WTC11 (cell line): ENCODE measurements at regions of chr1 and their contacts with region 1.

Region 1: GRCh38 chr1:22234476-22235030 is 91.7 kb upstream of the WNT4 start:
- DNase-seq: no peak
- ATAC-seq: no peak
- H3K4me3 Mint-ChIP-seq: no peak overlapping the region
- H3K27ac Mint-ChIP-seq: no peak overlapping the region
- H3K4me1 Mint-ChIP-seq: peaks cover 11% of the 10 kb centered on the region
- H3K27me3 Mint-ChIP-seq: no peaks in the 10 kb centered on the region
- CTCF ChIP-seq: no peak

Region 2: GRCh38 chr1:22245726-22246125 is 11.2 kb after region 1 on chr1:
- CTCF ChIA-PET with region 1: interaction called, 11 read pairs
- POLR2A ChIA-PET with region 1: no interaction called
- DNase-seq: no peak
- ATAC-seq: peak; percentile 68
- H3K4me3 Mint-ChIP-seq: no peak overlapping the region
- H3K27ac Mint-ChIP-seq: no peak overlapping the region
- H3K4me1 Mint-ChIP-seq: peaks cover 17% of the 10 kb centered on the region
- H3K27me3 Mint-ChIP-seq: no peaks in the 10 kb centered on the region; the same call in 1 of the 2 replicates
- CTCF ChIP-seq: no peak